Aorta (tissue), 5 donors: ENCODE measurements at regions of chr3 and their contacts with region 1.

Region 1: GRCh38 chr3:187041362-187042307 is 97.7 kb downstream of the RPL39L start:
- DNase-seq: no peak
- ATAC-seq: no peak
- H3K4me3 ChIP-seq: no peak overlapping the region
- H3K27ac ChIP-seq: peak overlapping the region in 1 of 2 donors; percentile 61
- H3K4me1 ChIP-seq: peaks cover 0 to 2% of the 10 kb centered on the region in 2 donors
- H3K27me3 ChIP-seq: no peaks in the 10 kb centered on the region

Region 2: GRCh38 chr3:186901135-186901734 is 140.4 kb before region 1 on chr3:
- intact Hi-C with region 1: no loop called
- DNase-seq: no peak
- ATAC-seq: no peak
- H3K4me3 ChIP-seq: no peak overlapping the region
- H3K27ac ChIP-seq: no peak overlapping the region
- H3K4me1 ChIP-seq: peaks cover 0 to 4% of the 10 kb centered on the region in 2 donors
- H3K27me3 ChIP-seq: no peaks in the 10 kb centered on the region

Region 3: DNA sequence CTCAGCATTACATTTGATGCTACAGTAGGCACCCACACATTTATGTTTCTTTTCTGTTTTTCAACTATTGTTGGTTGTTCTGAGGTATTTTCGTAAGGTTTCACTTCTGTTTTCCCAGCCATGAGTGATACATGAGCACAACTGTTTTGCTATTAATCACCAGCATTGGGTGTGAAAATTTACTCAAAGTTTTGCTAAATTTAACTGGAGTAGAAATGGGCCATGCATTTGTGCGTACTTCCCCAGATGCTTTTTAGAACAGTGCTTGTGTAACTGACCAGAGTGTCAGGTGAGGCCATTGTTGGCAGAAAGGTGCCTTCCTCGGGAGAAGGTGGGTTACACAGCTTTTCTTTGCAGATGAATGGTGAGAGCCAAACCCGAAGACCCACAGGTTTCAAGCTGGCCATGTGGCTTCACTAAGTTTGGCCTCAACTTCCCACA is 40.9 kb before region 1 on chr3:
- intact Hi-C with region 1: loop called in 1 of 2 experiments (anchors 5 kb)
- DNase-seq: no peak
- ATAC-seq: no peak
- H3K4me3 ChIP-seq: no peak overlapping the region
- H3K27ac ChIP-seq: no peak overlapping the region
- H3K4me1 ChIP-seq: no peaks in the 10 kb centered on the region
- H3K27me3 ChIP-seq: no peaks in the 10 kb centered on the region

Region 4: DNA sequence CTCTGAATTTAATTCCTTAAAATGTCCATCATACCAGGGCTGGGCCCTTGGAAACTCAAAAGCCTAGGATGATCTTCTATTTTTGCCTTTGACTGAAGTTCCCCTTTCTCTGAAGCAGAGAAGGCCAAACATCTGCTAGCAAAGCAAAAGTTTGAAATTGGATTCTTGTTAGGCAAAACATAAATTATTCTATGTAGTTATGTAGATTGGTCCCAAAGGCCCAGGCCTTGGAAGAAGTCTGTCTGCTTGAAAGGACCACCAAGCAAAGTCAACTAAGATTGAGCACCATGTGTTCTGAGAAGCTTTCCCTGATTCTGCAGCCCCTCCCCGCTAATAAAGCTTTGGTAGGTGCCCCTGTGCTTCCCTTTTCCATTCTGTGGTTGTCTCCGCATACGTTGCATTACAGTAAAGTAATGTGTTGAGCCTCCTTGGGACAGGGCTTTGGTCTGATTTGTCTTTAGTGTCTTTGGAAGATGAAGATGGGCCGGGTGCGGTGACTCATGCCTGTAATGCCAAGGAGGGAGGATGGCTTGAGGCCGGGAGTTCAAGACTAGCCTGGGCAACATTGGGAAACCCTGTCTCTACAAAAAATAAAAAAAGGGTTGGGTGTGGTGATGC is 41.2 kb after region 1 on chr3:
- intact Hi-C with region 1: loop called in 1 of 2 experiments (anchors 5 kb)
- DNase-seq: no peak
- ATAC-seq: no peak
- H3K4me3 ChIP-seq: no peak overlapping the region
- H3K27ac ChIP-seq: no peak overlapping the region
- H3K4me1 ChIP-seq: peaks cover 0 to 3% of the 10 kb centered on the region in 2 donors
- H3K27me3 ChIP-seq: no peaks in the 10 kb centered on the region

Region 5: GRCh38 chr3:187456250-187456649 is 414.6 kb after region 1 on chr3:
- intact Hi-C with region 1: no loop called
- DNase-seq: peak; percentile 82 to 84
- ATAC-seq: peak; percentile 66
- H3K4me3 ChIP-seq: no peak overlapping the region
- H3K27ac ChIP-seq: peak overlapping the region in 1 of 2 donors; percentile 57
- H3K4me1 ChIP-seq: peaks cover 0 to 12% of the 10 kb centered on the region in 2 donors
- H3K27me3 ChIP-seq: no peaks in the 10 kb centered on the region